ENCODE measurements at regions of chr14 and their contacts with region 1.

Region 1: GRCh38 chr14:30443368-30444007 is 115.5 kb upstream of the G2E3 start:
- DNase-seq: peak; percentile 77
- ATAC-seq: peak; percentile 88
- H3K4me3 ChIP-seq: no peak overlapping the region
- H3K27ac ChIP-seq: no peak overlapping the region
- H3K4me1 ChIP-seq: no peaks in the 10 kb centered on the region
- H3K27me3 ChIP-seq: no peaks in the 10 kb centered on the region
- CTCF ChIP-seq: peak; percentile 91
- EP300 ChIP-seq: no peak
- POLR2A ChIP-seq: no peak
- RAD21 ChIP-seq: no peak; the same call in none of the 2 replicates

Region 2: GRCh38 chr14:28756884-28757570 is 1686.5 kb before region 1 on chr14:
- CTCF ChIA-PET with region 1: interaction called, 6 read pairs
- POLR2A ChIA-PET with region 1: no interaction called
- in situ Hi-C with region 1: loop called (anchors 5 kb)
- intact Hi-C with region 1: loop called (anchors 1 kb)
- DNase-seq: peak; percentile 72
- ATAC-seq: peak; percentile 81
- H3K4me3 ChIP-seq: no peak overlapping the region
- H3K27ac ChIP-seq: no peak overlapping the region
- H3K4me1 ChIP-seq: peaks cover 20% of the 10 kb centered on the region
- H3K27me3 ChIP-seq: peaks cover 3 to 71% of the 10 kb centered on the region in 2 experiments; a peak in 3 of 5 replicates
- CTCF ChIP-seq: peak; percentile 86
- EP300 ChIP-seq: 0 out of 4 replicates have a peak, but pooled peaks of 1 of the 2 experiments have one; percentile 26
- POLR2A ChIP-seq: no peak
- RAD21 ChIP-seq: 0 out of 2 replicates have a peak, but pooled peaks have one; percentile 37

Region 3: GRCh38 chr14:30005114-30005808 is 438.2 kb before region 1 on chr14:
- CTCF ChIA-PET with region 1: no interaction called
- POLR2A ChIA-PET with region 1: no interaction called
- in situ Hi-C with region 1: no loop called
- intact Hi-C with region 1: loop called (anchors 1 kb)
- DNase-seq: peak; percentile 62
- ATAC-seq: peak; percentile 98
- H3K4me3 ChIP-seq: no peak overlapping the region
- H3K27ac ChIP-seq: no peak overlapping the region
- H3K4me1 ChIP-seq: no peaks in the 10 kb centered on the region
- H3K27me3 ChIP-seq: no peaks in the 10 kb centered on the region
- CTCF ChIP-seq: peak; percentile 78
- EP300 ChIP-seq: no peak
- POLR2A ChIP-seq: no peak
- RAD21 ChIP-seq: no peak; the same call in 1 of the 2 replicates

Region 4: GRCh38 chr14:30015489-30015888 is 428.0 kb before region 1 on chr14:
- CTCF ChIA-PET with region 1: no interaction called
- POLR2A ChIA-PET with region 1: no interaction called
- in situ Hi-C with region 1: no loop called
- intact Hi-C with region 1: no loop called
- DNase-seq: no peak
- ATAC-seq: no peak
- H3K4me3 ChIP-seq: no peak overlapping the region
- H3K27ac ChIP-seq: no peak overlapping the region
- H3K4me1 ChIP-seq: no peaks in the 10 kb centered on the region
- H3K27me3 ChIP-seq: no peaks in the 10 kb centered on the region
- CTCF ChIP-seq: no peak
- EP300 ChIP-seq: no peak
- POLR2A ChIP-seq: no peak
- RAD21 ChIP-seq: no peak

Region 5: GRCh38 chr14:30270200-30271161 is 173.0 kb before region 1 on chr14:
- CTCF ChIA-PET with region 1: interaction called, 4 read pairs
- POLR2A ChIA-PET with region 1: no interaction called
- in situ Hi-C with region 1: no loop called
- intact Hi-C with region 1: loop called (anchors 2 kb)
- DNase-seq: peak; percentile 85
- ATAC-seq: peak; percentile 100
- H3K4me3 ChIP-seq: no peak overlapping the region
- H3K27ac ChIP-seq: no peak overlapping the region
- H3K4me1 ChIP-seq: no peaks in the 10 kb centered on the region
- H3K27me3 ChIP-seq: peaks cover 0 to 4% of the 10 kb centered on the region in 2 experiments; a peak in 1 of 5 replicates
- CTCF ChIP-seq: peak; percentile 99
- EP300 ChIP-seq: no peak
- POLR2A ChIP-seq: no peak
- RAD21 ChIP-seq: peak; percentile 80; the same call in 1 of the 2 replicates

Region 6: GRCh38 chr14:30410986-30411385 is 32.5 kb before region 1 on chr14:
- CTCF ChIA-PET with region 1: no interaction called
- POLR2A ChIA-PET with region 1: no interaction called
- in situ Hi-C with region 1: no loop called
- intact Hi-C with region 1: loop called (anchors 1 kb)
- DNase-seq: no peak
- ATAC-seq: no peak
- H3K4me3 ChIP-seq: no peak overlapping the region
- H3K27ac ChIP-seq: no peak overlapping the region
- H3K4me1 ChIP-seq: peaks cover 20% of the 10 kb centered on the region
- H3K27me3 ChIP-seq: no peaks in the 10 kb centered on the region
- CTCF ChIP-seq: no peak
- EP300 ChIP-seq: no peak
- POLR2A ChIP-seq: no peak
- RAD21 ChIP-seq: no peak

Region 7: DNA sequence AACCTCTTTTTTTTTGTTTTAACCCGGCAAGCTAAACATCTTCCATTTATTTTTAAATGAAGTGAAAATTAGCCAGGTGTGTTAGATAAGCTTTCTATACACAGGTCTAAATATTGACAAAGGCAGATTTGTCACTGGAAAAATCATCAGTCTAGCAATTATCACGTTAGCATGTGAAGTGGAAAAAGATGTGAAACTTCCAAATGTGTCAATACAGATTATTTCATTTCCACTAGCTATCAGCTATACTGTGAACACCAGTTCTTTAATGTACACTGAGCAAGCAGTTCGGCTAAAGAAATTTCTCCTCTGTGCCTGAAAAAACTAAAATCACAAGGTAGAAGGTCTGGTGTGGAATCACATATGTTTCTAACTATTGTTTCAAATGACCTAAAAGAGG is 18.9 kb after region 1 on chr14:
- CTCF ChIA-PET with region 1: no interaction called
- POLR2A ChIA-PET with region 1: no interaction called
- in situ Hi-C with region 1: no loop called
- intact Hi-C with region 1: no loop called
- DNase-seq: no peak
- ATAC-seq: no peak
- H3K4me3 ChIP-seq: no peak overlapping the region
- H3K27ac ChIP-seq: no peak overlapping the region
- H3K4me1 ChIP-seq: no peaks in the 10 kb centered on the region
- H3K27me3 ChIP-seq: no peaks in the 10 kb centered on the region
- CTCF ChIP-seq: no peak
- EP300 ChIP-seq: no peak
- POLR2A ChIP-seq: no peak
- RAD21 ChIP-seq: no peak